Pancreas (tissue), 10 donors: ENCODE measurements at regions of chr5 and their contacts with region 1.

Region 1: DNA sequence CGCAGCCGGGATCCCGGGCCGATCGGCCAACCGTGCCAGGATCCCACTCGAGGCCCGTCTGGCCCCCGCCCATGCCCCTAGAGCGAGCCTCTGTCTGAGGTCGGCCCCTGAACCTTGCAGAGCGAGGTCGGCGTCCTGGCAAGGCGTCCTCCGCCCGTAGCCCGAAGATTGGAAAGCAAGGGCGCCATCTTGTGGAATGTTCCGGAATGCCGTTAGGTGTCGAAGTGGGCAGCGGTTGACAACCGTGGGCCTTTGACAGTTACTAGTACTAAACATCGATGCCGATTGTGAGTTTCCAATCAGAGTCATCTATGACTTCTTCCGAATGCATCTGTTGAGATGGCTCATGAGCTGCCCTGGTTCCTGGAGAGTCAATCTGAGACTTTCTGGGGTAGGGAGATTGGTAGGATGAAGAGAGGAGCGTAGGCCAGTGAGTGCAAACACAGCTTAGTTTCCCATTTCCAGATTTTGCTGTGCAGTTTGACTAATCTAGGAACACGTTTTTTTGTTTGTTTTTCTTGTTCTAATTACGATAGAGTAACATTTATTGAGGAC is 923 bp upstream of the PLK2 start:
- DNase-seq: peak in 5 of 6 donors; percentile 86 to 94 (median 94)
- ATAC-seq: peak; percentile 76 to 88 (median 80)
- H3K4me3 ChIP-seq: peak overlapping the region; percentile 51 to 90 (median 83)
- H3K27ac ChIP-seq: peak overlapping the region; percentile 97 to 98 (median 97)
- H3K4me1 ChIP-seq: peaks cover 7 to 29% (median 15%) of the 10 kb centered on the region in 3 donors
- H3K27me3 ChIP-seq: no peaks in the 10 kb centered on the region
- CTCF ChIP-seq: peak; percentile 50 to 89 (median 67)

Region 2: GRCh38 chr5:57291894-57292293 is 1168.9 kb before region 1 on chr5:
- intact Hi-C with region 1: loop called in 2 of 3 experiments (anchors 5 to 10 kb)
- DNase-seq: no peak
- ATAC-seq: no peak
- H3K4me3 ChIP-seq: no peak overlapping the region
- H3K27ac ChIP-seq: no peak overlapping the region
- H3K4me1 ChIP-seq: no peaks in the 10 kb centered on the region
- H3K27me3 ChIP-seq: no peaks in the 10 kb centered on the region
- CTCF ChIP-seq: no peak

Region 3: GRCh38 chr5:57298295-57298984 is 1162.4 kb before region 1 on chr5:
- intact Hi-C with region 1: loop called in 2 of 3 experiments (anchors 5 to 10 kb)
- DNase-seq: peak; percentile 54 to 88 (median 81)
- ATAC-seq: peak; percentile 94 to 98 (median 97)
- H3K4me3 ChIP-seq: no peak overlapping the region
- H3K27ac ChIP-seq: peak overlapping the region in 2 of 4 donors; percentile 1 to 8
- H3K4me1 ChIP-seq: peaks cover 0 to 6% (median 5%) of the 10 kb centered on the region in 3 donors
- H3K27me3 ChIP-seq: no peaks in the 10 kb centered on the region
- CTCF ChIP-seq: peak; percentile 56 to 74 (median 58)

Region 4: DNA sequence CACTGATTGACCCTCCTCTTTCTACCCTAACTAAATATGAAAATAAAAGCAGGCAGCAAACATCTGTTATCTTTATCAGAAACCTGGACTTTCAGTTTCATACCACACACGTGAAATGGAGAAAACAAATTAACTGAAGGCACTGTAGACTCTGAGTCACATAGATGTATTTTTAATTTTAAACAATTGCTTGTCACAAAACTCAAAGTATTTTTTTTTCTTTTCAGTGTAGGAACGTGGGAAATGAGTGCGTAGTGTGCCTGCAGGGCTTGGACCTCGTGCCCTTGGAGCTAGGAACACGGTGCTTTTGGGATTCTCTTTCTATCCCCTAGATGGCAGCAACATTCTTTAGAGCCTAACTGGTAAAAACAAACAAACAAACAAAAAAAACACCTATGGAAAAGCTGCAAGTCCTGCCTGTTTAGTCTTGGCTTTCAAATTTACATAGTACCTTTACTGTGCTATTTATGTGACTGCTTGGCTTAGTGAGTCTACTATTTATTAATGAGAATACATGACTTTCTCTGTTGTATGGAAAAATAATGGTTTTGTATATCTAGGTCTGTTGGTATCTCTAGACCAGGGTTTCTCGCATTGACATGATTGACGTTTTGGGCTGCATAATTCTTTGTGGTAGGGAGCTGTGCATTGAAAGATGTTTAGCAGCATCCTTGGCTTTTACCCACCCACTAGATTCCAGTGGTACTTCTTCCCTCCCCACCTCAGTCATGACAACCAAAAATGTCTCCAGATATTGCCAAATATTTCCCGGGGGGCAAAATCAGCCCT is 961.4 kb before region 1 on chr5:
- intact Hi-C with region 1: loop called in 1 of 3 experiments (anchors 10 kb)
- DNase-seq: peak in 1 of 6 donors; percentile 15
- ATAC-seq: peak; percentile 47 to 84 (median 69)
- H3K4me3 ChIP-seq: peak overlapping the region in 2 of 4 donors; percentile 18 to 22
- H3K27ac ChIP-seq: no peak overlapping the region
- H3K4me1 ChIP-seq: peaks cover 0 to 13% (median 13%) of the 10 kb centered on the region in 3 donors
- H3K27me3 ChIP-seq: no peaks in the 10 kb centered on the region
- CTCF ChIP-seq: peak; percentile 6 to 49 (median 42)

Region 5: DNA sequence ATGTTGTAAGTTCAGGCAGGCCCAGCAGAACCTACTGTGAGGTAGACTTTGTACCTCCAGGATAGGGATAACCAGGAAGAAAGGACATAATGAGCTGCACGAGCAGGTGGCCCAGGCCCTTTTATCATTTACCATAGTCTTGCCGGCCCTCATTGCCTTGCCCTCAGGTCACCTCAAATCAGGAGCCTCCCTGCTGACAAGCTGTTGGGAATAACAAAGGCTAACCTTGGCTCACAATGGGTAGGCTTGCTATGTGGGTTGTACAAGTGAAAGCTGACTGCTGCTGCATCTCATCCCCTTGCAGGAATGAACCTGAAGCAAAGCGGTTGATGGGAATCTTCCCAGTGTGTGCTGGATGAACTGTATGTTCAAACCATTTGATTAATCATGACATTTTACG is 818.7 kb before region 1 on chr5:
- intact Hi-C with region 1: loop called in 1 of 3 experiments (anchors 10 kb)
- DNase-seq: no peak
- ATAC-seq: no peak
- H3K4me3 ChIP-seq: no peak overlapping the region
- H3K27ac ChIP-seq: no peak overlapping the region
- H3K4me1 ChIP-seq: no peaks in the 10 kb centered on the region
- H3K27me3 ChIP-seq: no peaks in the 10 kb centered on the region
- CTCF ChIP-seq: no peak

Region 6: GRCh38 chr5:57779383-57780223 is 681.2 kb before region 1 on chr5:
- intact Hi-C with region 1: loop called in 2 of 3 experiments (anchors 5 to 10 kb)
- DNase-seq: peak in 2 of 6 donors; percentile 23 to 42
- ATAC-seq: peak; percentile 88 to 94 (median 91)
- H3K4me3 ChIP-seq: no peak overlapping the region
- H3K27ac ChIP-seq: no peak overlapping the region
- H3K4me1 ChIP-seq: peaks cover 13 to 26% (median 24%) of the 10 kb centered on the region in 3 donors
- H3K27me3 ChIP-seq: no peaks in the 10 kb centered on the region
- CTCF ChIP-seq: peak in 3 of 4 donors; percentile 33 to 50 (median 44)

Region 7: DNA sequence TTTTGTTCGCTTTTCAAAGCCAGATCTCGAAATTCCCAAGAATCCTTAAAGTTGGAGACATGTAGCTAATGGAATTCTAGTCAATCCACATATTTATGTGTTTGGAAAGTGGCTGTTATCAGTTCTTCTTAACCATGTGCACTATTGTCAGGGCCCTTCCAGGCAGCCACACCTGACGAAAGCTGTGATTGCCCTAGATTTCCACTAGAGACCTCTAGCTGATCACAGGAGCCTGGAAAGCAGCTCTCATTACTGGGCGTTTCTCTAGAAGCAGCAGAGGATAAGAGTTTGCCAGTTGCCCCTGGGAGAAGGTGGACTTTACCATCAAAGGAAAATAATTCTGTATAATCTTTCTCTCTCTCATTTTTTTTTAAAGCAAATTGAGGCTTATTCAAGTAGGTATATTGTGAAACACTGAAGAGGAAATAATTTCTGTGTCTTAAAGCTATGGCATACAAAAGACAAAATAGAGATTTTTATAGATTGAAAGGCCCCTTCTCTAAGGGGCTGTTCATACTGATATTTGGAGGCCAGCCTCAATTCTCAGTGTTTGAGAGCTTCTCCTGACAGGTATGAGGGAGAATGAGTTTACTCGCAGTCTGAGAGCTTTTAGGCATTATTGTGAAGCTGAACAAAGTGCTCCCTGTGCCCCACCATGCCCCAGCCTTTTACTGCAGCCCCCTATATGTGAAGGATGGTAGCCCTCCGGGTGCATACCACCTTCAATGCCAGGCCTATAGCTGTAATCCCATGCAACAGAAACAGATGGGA is 572.8 kb before region 1 on chr5:
- intact Hi-C with region 1: loop called in 1 of 3 experiments (anchors 5 kb)
- DNase-seq: peak in 5 of 6 donors; percentile 28 to 59 (median 50)
- ATAC-seq: peak; percentile 95 to 100 (median 98)
- H3K4me3 ChIP-seq: no peak overlapping the region
- H3K27ac ChIP-seq: no peak overlapping the region
- H3K4me1 ChIP-seq: no peaks in the 10 kb centered on the region
- H3K27me3 ChIP-seq: no peaks in the 10 kb centered on the region
- CTCF ChIP-seq: peak in 3 of 4 donors; percentile 37 to 52 (median 44)